Activated CD4-positive, alpha-beta T cell treated with anti-CD3 and anti-CD28 coated beads, Interleukin-2, amount 10 ng/mL, durations not matched to agents 24 days and 14 days (primary cell): ENCODE measurements at regions of chr14 and their contacts with region 1.

Region 1: GRCh38 chr14:100067971-100068959 is 3.0 kb downstream of the EVL start:
- DNase-seq: peak; percentile 95
- H3K4me3 Mint-ChIP-seq: peak overlapping the region; percentile 87
- H3K27ac Mint-ChIP-seq: peak overlapping the region; percentile 98
- H3K4me1 Mint-ChIP-seq: peaks cover 77% of the 10 kb centered on the region
- H3K27me3 Mint-ChIP-seq: no peaks in the 10 kb centered on the region

Region 2: DNA sequence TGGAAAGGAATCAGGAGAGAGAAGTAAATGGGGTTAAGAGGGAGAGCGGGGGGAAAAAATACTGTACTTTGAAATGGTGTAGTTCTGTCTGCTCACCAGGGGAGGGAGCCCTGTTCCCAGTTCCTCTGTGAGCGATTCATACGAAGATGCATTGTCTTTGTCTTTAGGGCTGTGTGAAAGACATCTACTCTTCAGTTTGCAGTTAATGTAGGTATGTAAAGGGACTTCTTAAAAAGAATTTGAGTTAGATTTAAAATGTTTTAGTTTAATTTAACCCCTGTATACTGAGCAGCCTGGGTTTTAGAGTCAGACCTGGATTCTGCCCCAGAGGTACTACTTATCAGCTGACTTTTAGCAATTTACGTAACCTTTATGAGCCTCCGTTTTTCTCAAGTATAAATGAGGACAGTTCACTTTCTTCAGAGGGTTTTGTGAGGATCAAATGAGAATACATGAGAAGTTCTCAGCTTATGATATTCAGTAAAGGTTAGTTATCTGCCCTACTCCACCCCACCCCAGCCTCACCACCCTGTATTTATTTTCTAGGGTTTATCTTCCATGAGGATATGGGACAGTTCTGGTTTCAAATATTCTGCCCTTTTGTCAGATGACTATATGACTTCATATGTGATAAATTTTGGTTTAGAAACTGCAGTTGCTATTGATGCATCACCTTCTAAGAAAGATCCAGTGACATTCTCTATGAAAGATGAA is 85.6 kb before region 1 on chr14:
- intact Hi-C with region 1: loop called (anchors 5 kb)
- DNase-seq: peak; percentile 89
- H3K4me3 Mint-ChIP-seq: no peak overlapping the region
- H3K27ac Mint-ChIP-seq: no peak overlapping the region
- H3K4me1 Mint-ChIP-seq: peaks cover 16% of the 10 kb centered on the region
- H3K27me3 Mint-ChIP-seq: no peaks in the 10 kb centered on the region

Region 3: DNA sequence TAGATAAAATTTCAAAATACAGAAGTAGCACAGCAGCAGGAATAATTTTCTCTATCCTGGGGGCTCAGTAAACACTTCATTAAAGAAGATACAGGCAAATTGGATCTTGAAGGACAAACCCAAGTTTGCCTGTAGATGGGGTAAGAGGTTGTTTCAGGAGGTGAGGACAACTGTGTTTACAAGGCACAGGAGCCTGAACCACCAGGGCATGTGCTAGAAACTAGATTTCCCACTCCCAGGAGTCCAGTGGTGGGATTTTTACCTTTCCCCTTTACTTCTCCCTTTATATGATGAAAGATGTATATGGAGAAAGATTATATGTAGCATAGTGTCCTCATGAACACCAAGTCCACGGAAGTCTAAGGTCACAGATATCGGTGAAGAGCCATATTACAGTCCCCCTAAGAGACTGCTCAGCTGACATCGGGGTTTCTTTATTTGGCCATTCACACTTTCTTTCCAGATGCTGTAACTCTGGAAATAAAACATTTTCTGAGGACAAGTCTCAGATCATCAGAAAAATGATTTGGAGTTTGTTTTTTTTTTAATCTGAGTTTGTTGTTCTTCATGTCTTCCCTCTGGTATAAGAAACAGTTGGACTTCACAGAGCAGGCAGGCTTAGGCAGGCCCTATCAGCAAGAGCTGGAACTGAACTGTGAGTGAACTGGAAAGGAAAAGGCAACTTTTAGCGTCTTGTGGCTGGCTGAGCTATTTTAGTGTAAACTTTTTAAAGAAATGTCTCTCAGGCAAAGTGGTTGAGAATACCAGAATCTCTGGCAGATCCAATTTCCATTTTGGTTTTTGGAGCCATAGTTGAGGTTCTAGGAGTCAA is 11.1 kb before region 1 on chr14:
- intact Hi-C with region 1: loop called (anchors 1 kb)
- DNase-seq: peak; percentile 82
- H3K4me3 Mint-ChIP-seq: peak overlapping the region; percentile 67
- H3K27ac Mint-ChIP-seq: peak overlapping the region; percentile 91
- H3K4me1 Mint-ChIP-seq: peaks cover 55% of the 10 kb centered on the region
- H3K27me3 Mint-ChIP-seq: no peaks in the 10 kb centered on the region

Region 4: DNA sequence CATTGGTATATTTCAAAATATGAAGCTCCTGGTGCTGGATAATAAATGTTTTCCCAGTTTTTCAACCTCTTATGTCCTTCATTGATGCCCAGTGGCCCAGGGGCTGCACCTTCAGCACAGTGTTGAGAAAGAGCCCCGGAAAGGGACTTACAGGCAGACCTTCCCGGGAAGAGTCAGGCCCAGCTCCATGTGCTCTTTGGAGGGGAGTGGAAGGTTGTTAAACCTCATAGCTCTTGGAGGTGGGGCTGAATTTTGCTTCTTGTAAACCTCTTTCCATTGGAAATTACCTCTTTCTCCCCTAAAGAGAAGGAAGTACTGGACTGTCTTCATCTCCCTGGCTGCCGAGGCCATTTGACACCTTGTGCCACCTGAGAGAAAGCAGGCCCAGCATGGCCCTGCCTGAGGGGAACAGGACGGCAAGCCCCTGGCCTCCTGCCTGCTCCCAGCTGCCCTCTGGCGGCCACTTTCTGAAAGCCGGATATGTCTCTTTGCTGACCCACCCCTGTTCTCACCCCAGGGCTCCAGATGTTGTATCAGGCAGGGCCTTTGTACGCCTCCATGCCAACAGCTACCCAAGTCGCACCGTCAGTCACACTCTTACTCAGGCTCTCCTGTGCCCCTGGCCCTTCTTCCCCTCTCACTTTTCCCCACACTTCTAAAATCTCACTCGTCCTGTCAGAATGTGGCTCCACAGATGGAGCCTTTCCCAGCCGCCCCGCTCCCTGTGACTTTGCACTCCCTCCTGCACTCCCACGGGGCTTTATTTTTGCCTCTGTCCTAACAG is 40.0 kb after region 1 on chr14:
- intact Hi-C with region 1: loop called (anchors 1 kb)
- DNase-seq: peak; percentile 95
- H3K4me3 Mint-ChIP-seq: peak overlapping the region; percentile 40
- H3K27ac Mint-ChIP-seq: peak overlapping the region; percentile 86
- H3K4me1 Mint-ChIP-seq: peaks cover 66% of the 10 kb centered on the region
- H3K27me3 Mint-ChIP-seq: no peaks in the 10 kb centered on the region

Region 5: GRCh38 chr14:100147181-100147631 is 78.9 kb after region 1 on chr14:
- intact Hi-C with region 1: no loop called
- DNase-seq: peak; percentile 84
- H3K4me3 Mint-ChIP-seq: no peak overlapping the region
- H3K27ac Mint-ChIP-seq: peak overlapping the region; percentile 58
- H3K4me1 Mint-ChIP-seq: peaks cover 3% of the 10 kb centered on the region
- H3K27me3 Mint-ChIP-seq: no peaks in the 10 kb centered on the region

Region 6: GRCh38 chr14:100239840-100240724 is 171.8 kb after region 1 on chr14:
- intact Hi-C with region 1: loop called (anchors 2 kb)
- DNase-seq: peak; percentile 96
- H3K4me3 Mint-ChIP-seq: peak overlapping the region; percentile 96
- H3K27ac Mint-ChIP-seq: peak overlapping the region; percentile 89
- H3K4me1 Mint-ChIP-seq: peaks cover 46% of the 10 kb centered on the region
- H3K27me3 Mint-ChIP-seq: peaks cover 2% of the 10 kb centered on the region

Region 7: DNA sequence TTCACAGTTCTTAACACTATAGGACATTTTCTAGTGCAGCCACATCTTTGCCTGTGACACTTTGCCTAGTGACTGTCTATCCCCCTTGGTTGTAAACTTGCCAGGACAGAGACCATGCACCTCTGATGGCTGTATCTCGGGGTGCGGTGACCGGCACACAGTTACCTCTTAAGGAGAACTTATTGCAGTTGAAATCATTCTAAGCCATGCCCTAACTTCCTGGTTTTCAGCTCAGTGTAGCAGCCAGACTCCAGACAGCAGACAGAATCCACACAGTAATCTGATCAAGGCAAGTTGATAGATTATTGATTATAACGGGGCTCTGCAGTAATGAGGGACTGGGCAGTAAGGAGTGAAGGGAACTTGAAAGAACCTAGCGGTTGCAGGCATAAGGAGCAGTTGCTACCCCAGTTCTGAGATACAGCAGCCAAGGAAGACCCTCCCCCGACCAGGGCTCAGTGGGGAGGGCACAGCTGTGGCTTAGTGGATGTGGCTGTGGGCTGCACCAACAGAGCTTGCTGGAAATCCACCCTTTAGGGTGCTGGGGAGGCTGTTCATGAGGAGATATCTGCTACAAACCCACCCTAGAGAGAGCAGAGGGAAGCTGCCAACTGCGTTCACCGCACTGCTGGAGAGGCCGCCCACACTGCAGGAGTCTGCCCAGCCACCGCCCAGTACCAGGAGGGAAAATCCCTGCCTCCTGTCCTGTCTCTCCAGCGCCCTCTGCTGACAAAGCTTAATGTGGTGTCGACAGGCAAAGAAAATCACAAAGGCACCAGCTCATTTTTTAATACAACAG is 577.1 kb after region 1 on chr14:
- intact Hi-C with region 1: loop called (anchors 10 kb)
- DNase-seq: peak; percentile 97
- H3K4me3 Mint-ChIP-seq: peak overlapping the region; percentile 52
- H3K27ac Mint-ChIP-seq: no peak overlapping the region
- H3K4me1 Mint-ChIP-seq: peaks cover 49% of the 10 kb centered on the region
- H3K27me3 Mint-ChIP-seq: peaks cover 17% of the 10 kb centered on the region